Activated CD8-positive, alpha-beta T cell treated with anti-CD3 and anti-CD28 coated beads, Interleukin-2, amount 10 ng/mL, durations not matched to agents 7 days and 5 days (primary cell): ENCODE measurements at regions of chr22 and their contacts with region 1.

Region 1: DNA sequence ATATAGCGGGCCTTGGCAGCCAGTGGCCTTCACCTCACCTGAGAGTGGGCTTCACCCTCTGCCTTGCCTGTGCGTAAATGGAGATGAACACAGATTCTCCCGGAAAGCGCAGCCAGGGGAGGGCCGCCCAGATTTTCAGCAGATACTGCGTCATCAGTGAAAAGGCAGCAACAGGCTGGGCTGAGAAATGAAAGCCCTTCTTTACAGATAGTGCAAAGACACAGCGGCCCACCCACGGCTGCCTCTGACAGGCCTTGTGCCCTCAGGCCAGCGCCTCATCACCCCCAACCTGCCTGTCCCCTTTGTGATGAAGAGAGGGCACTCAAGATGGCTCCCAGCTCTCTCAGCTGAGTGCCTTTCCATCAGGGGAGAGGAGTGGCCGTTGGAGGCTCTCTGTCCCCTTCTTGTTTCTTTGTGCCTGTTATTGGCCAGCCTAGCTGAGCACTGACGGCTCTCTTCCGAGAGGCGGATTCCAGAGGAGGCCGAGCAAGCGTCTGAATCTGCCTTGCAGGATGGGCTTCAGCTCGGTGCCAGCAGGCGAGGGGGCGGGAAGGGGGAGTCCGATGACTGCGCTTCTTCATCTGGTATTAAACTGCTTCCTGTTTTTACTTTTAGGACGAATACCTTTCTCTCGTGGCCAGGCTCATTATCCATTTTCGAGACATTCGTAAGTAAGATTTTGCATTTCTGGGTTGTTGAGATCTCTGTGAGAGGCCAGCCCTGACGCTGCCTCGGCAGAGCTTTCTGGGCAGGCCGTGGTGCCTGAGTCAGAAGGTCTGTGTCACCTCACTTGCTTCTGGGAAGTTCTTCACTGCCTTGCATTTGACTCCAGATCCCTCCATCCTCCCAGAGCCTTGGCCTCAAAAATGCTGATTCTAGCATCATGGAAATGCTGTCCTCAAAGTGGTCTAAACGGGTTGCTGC is 43.7 kb downstream of the MED15 start:
- DNase-seq: peak; percentile 61
- ATAC-seq: peak; percentile 25
- H3K4me3 Mint-ChIP-seq: peak overlapping the region; percentile 76
- H3K27ac Mint-ChIP-seq: peak overlapping the region; percentile 96
- H3K4me1 Mint-ChIP-seq: peaks cover 92% of the 10 kb centered on the region
- H3K27me3 Mint-ChIP-seq: no peaks in the 10 kb centered on the region

Region 2: DNA sequence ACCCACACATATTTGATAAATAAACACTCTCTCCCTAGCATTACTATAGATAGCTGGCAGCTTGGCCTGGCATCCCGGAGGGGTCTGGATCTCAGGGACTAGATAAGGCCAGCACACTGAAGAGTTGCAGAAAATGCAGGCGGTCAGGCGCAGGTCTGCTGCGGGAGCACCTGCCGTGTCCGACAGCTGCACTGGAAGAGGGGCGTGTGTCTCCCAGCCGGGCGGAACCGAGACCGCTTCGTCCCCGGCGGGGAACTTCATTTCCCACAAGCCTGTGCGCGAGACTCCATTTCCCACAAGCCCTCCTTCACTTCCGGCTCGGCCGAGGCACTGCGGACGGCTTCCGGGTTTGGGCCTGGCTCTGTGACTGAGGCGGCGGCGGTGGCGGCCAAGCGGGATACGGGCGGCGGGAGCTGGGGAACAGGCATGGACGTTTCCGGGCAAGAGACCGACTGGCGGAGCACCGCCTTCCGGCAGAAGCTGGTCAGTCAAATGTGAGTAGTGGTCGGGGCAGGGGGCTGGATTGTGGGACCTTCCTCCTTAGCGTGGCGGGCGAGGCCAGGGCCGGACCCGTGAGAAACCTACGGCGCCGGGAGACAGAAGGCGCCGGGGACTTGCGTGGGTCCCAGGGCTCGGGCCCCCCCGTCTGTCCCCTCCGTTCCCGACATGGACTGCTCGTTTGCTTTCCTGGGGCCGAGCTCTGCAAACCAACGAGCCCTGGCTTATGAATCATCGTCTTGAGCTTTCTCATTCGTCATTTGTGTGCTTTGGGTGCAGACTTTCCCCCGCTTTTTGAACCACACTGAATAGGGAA is 43.6 kb before region 1 on chr22 and contains the start of gene MED15:
- CTCF ChIA-PET with region 1: interaction called, 30 read pairs
- POLR2A ChIA-PET with region 1: interaction called, 25 read pairs
- DNase-seq: peak; percentile 95
- ATAC-seq: peak; percentile 93
- H3K4me3 Mint-ChIP-seq: peak within 1 kb of the TSS; percentile 90
- H3K27ac Mint-ChIP-seq: peak within 1 kb of the TSS; percentile 92
- H3K4me1 Mint-ChIP-seq: peaks cover 49% of the 10 kb centered on the region
- H3K27me3 Mint-ChIP-seq: no peaks in the 10 kb centered on the region
- total RNA-seq, gene MED15: 155 to 161 TPM